ENCODE measurements at regions of chr12 and their contacts with region 1.

Region 1: GRCh38 chr12:24778486-24779304 is 170.2 kb downstream of the BCAT1 start:
- DNase-seq: no peak
- H3K4me3 ChIP-seq: no peak overlapping the region
- CTCF ChIP-seq: peak; percentile 33

Region 2: DNA sequence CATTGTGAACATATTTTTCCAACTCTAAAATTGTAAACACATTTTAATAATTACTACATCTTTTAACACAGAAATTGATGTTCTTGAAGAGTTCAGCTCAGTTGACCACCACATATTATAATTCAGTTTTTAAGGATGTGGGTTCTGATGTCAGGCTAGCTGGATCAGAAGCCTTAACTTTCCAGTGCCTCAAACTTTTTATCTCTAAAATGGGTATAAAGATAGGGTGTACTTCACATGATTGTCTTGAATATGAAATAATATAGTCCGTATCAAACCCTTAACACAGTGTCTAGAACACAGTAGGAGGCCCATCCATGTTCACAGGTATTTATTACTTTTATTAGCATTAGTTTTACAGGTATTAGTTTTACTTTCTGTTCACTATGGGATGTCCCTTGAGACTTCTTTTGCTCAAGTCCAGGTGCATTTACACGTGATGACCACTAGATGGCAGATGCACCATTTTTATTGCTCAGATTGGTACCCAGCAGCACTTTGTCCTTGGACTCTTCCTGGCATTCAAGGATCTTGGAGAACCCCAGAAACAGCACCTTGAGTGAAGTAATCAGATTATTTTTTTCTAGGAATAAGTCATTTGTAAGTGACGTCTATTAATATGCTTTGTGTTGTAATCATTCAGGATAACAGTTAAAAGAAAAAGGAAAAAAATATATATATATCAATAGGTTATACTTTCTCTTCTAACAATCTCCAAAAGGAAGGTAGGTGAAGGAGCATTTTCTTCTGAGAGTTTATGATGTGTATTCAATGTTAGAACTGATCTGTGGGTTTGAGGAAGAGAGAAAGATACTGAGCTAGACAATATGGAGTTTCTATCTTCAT is 1573.5 kb before region 1 on chr12:
- CTCF ChIA-PET with region 1: interaction called, 14 read pairs
- POLR2A ChIA-PET with region 1: no interaction called
- DNase-seq: peak; percentile 2
- H3K4me3 ChIP-seq: no peak overlapping the region
- CTCF ChIP-seq: peak; percentile 71

Region 3: GRCh38 chr12:24252602-24253001 is 526.1 kb before region 1 on chr12:
- CTCF ChIA-PET with region 1: no interaction called
- POLR2A ChIA-PET with region 1: no interaction called
- DNase-seq: no peak
- H3K4me3 ChIP-seq: no peak overlapping the region
- CTCF ChIP-seq: no peak

Region 4: DNA sequence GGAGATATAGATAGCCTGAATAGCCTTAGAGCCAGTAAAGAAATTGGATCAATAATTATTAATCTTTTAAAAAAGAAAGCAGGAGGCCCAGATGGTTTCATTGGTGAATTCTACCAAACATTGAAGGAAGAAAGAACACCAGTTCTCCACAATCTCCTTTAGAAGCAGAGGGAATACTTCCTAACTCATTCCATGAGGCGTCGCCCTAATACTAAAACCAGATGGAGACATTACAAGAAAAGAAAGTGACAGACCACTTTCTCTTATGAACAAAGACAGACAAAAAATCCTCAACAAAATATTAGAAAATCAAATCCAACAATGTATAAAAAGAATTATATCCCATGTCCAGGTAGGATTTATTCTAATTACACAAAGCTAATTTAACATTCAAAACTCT is 192.4 kb before region 1 on chr12:
- CTCF ChIA-PET with region 1: interaction called, 12 read pairs
- POLR2A ChIA-PET with region 1: no interaction called
- DNase-seq: no peak
- H3K4me3 ChIP-seq: no peak overlapping the region
- CTCF ChIP-seq: no peak

Region 5: GRCh38 chr12:24768415-24768814 is 10.3 kb before region 1 on chr12:
- CTCF ChIA-PET with region 1: interaction called, 13 read pairs
- POLR2A ChIA-PET with region 1: no interaction called
- DNase-seq: no peak
- H3K4me3 ChIP-seq: no peak overlapping the region
- CTCF ChIP-seq: no peak

Measured in AG04449 (cell line).